A549 (cell line): ENCODE measurements at regions of chr1 and their contacts with region 1.

Region 1: GRCh38 chr1:201042779-201043461 is 19.4 kb upstream of the KIF21B start:
- DNase-seq: peak; percentile 67 to 78
- ATAC-seq: peak; percentile 85 to 94
- H3K4me3 ChIP-seq: no peak overlapping the region
- H3K27ac ChIP-seq: peak overlapping the region in 1 of 2 experiments; percentile 27; a peak in 3 of 6 replicates
- H3K4me1 ChIP-seq: 0 out of 3 replicates have a peak, but pooled peaks cover 3% of the 10 kb centered on the region
- CTCF ChIP-seq: peak; percentile 91
- EP300 ChIP-seq: no peak
- POLR2A ChIP-seq: no peak
- RAD21 ChIP-seq: peak; percentile 94 to 96

Region 2: DNA sequence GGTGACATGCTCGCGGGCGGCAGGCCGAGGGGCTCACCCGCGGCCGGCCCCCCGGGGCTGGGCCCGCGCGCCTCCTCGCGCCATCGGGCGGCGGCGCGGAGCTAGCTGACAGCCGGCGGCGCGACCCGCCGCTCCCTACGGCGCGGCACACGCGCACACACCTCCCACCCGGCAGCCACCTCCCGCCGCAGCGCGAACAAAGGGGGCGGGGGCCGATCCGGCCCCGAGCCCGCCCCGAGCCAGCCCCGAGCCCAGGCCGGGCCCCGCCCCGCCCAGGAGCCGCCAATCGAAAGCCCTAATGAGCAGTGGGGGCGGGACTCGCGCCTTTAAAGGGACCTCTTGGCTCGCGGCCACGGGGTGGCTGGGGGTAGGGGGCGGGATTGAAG is 19.4 kb before region 1 on chr1 and contains the start of gene KIF21B:
- CTCF ChIA-PET with region 1: interaction called, 94 read pairs
- POLR2A ChIA-PET with region 1: no interaction called
- DNase-seq: peak; percentile 59 to 88
- ATAC-seq: peak; percentile 66 to 85
- H3K4me3 ChIP-seq: peak within 1 kb of the TSS; percentile 76
- H3K27ac ChIP-seq: peak within 1 kb of the TSS; percentile 64 to 96
- H3K4me1 ChIP-seq: peaks cover 64% of the 10 kb centered on the region
- CTCF ChIP-seq: no peak
- EP300 ChIP-seq: no peak
- POLR2A ChIP-seq: no peak
- RAD21 ChIP-seq: no peak
- polyA plus RNA-seq, gene KIF21B: 3.6 and 3.8 TPM in 2 replicates